Adrenal gland (tissue), 19 donors: ENCODE measurements at regions of chr1 and their contacts with region 1.

Region 1: GRCh38 chr1:245156081-245156735 is 1.4 kb downstream of the KIF26B start:
- DNase-seq: peak; percentile 80 to 90 (median 87)
- H3K4me3 ChIP-seq: peak overlapping the region in 3 of 4 donors; percentile 47 to 76 (median 47)
- H3K27ac ChIP-seq: no peak overlapping the region
- H3K4me1 ChIP-seq: peaks cover 32 to 40% of the 10 kb centered on the region in 2 donors
- H3K27me3 ChIP-seq: peaks cover 9% of the 10 kb centered on the region
- CTCF ChIP-seq: peak; percentile 17 to 89 (median 66)
- POLR2A ChIP-seq: peak in 1 of 2 donors; percentile 9

Region 2: DNA sequence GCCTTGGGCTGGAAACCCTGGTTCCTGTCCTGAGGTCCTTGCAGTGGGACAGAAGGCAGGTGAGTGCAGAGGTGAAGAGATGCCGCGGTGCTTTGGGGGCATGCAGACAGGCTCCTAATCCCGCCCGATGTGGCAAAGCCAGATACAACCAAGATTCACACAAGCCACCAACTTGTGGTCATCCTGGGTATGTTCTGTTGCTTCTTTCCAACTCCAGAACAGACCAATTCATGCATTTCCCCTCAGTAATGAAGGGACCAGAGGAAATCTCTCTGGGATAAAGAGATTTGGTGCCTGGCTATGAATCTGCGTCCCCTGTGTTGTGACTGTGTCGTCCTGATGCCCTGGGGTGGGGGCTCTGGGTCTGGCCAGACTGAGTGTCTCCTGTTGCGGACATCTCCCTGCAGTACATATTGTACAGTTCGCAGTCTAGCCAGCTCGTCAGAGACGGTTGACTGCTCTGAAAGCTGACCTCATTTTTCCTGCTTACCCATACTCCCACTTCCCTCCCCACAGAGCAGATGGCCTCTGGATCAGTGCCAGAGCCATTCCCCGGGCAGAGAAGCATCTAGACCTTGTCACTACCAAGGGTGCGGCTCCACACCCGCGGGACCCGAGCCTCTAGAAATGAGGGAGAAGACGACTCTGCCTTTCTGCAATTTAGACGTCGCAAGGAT is 214.8 kb after region 1 on chr1:
- intact Hi-C with region 1: loop called (anchors 10 kb)
- DNase-seq: peak in 4 of 7 donors; percentile 9 to 76 (median 19)
- H3K4me3 ChIP-seq: no peak overlapping the region
- H3K27ac ChIP-seq: no peak overlapping the region
- H3K4me1 ChIP-seq: no peaks in the 10 kb centered on the region
- H3K27me3 ChIP-seq: no peaks in the 10 kb centered on the region
- CTCF ChIP-seq: no peak
- POLR2A ChIP-seq: no peak

Region 3: GRCh38 chr1:246002725-246003441 is 846.7 kb after region 1 on chr1:
- intact Hi-C with region 1: loop called (anchors 5 kb)
- DNase-seq: peak; percentile 78 to 97 (median 90)
- H3K4me3 ChIP-seq: no peak overlapping the region
- H3K27ac ChIP-seq: no peak overlapping the region
- H3K4me1 ChIP-seq: peaks cover 0 to 6% of the 10 kb centered on the region in 2 donors
- H3K27me3 ChIP-seq: no peaks in the 10 kb centered on the region
- CTCF ChIP-seq: peak; percentile 86 to 95 (median 92)
- POLR2A ChIP-seq: no peak

Region 4: DNA sequence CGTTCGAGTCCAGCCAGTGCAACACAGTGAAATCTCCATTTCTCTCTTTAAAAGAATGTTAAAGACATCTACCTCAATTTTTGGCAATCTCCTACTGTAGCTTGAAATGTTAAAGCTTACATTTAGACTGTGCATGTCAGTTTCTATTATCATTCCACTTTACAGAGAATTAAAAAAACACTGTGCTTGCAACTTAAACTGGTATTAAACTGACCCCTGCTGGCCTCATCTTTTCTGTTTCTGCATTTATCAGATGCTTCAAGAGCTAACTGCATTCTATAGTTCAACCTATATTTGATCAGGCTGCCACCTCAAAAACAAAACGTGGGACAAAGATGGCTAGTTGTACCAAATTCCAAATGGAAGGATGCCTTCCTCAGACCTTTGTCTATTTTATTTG is 1124.3 kb after region 1 on chr1:
- intact Hi-C with region 1: loop called in 1 of 2 experiments (anchors 10 kb)
- DNase-seq: peak in 1 of 7 donors; percentile 28
- H3K4me3 ChIP-seq: no peak overlapping the region
- H3K27ac ChIP-seq: no peak overlapping the region
- H3K4me1 ChIP-seq: no peaks in the 10 kb centered on the region
- H3K27me3 ChIP-seq: no peaks in the 10 kb centered on the region
- CTCF ChIP-seq: peak in 5 of 6 experiments; percentile 26 to 49 (median 45)
- POLR2A ChIP-seq: no peak

Region 5: DNA sequence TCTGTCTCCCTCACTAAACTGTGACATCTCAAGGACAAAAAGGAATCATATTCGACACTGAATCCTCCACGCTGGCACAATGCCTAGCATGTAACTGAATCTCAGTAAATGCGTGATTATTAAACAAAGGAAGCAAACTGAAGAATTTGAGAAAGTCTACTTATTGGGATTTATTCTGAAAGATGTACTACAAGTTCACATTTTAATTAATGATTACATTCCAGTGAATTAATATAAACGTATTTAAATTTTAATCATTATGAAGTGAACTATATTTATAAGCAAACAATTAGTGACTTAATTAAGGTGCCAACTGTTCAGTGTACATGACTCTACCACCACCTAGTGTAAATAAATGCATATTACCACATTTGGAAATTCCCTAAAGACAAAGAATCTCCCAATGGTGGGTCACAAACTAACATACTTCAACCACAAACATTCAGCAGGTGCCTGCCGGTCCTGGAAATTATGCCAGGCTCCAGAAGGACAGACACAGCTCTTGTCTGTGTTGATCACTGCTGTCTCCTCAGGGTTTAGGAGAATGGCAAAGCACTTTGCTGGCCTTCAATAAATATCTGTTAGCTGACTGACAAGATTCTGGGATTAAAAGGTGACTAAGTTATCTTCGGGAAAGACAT is 1294.5 kb after region 1 on chr1:
- intact Hi-C with region 1: loop called in 1 of 2 experiments (anchors 10 kb)
- DNase-seq: peak in 2 of 7 donors; percentile 20 to 33
- H3K4me3 ChIP-seq: no peak overlapping the region
- H3K27ac ChIP-seq: no peak overlapping the region
- H3K4me1 ChIP-seq: no peaks in the 10 kb centered on the region
- H3K27me3 ChIP-seq: no peaks in the 10 kb centered on the region
- CTCF ChIP-seq: peak; percentile 61 to 89 (median 82)
- POLR2A ChIP-seq: no peak